Activated CD4-positive, alpha-beta T cell treated with anti-CD3 and anti-CD28 coated beads for 36 hours (primary cell): ENCODE measurements at regions of chr9 and their contacts with region 1.

Region 1: GRCh38 chr9:127734747-127735529 is at the start of gene TOR2A:
- DNase-seq: peak; percentile 99
- ATAC-seq: peak; percentile 93
- H3K4me3 Mint-ChIP-seq: peak within 1 kb of the TSS; percentile 72
- H3K27ac Mint-ChIP-seq: peak within 1 kb of the TSS; percentile 73
- H3K4me1 Mint-ChIP-seq: peaks cover 12% of the 10 kb centered on the region
- H3K27me3 Mint-ChIP-seq: no peaks in the 10 kb centered on the region
- total RNA-seq, gene TOR2A: 11.3 to 14.0 TPM

Region 2: GRCh38 chr9:127450830-127451724 is 283.9 kb before region 1 on chr9 and contains the starts of genes LRSAM1 and RPL12:
- CTCF ChIA-PET with region 1: interaction called, 3 read pairs
- POLR2A ChIA-PET with region 1: interaction called, 6 read pairs
- intact Hi-C with region 1: loop called in 1 of 2 experiments (anchors 1 kb)
- DNase-seq: peak; percentile 99
- ATAC-seq: peak; percentile 65
- H3K4me3 Mint-ChIP-seq: peak within 1 kb of the TSS; percentile 98
- H3K27ac Mint-ChIP-seq: peak within 1 kb of the TSS; percentile 98
- H3K4me1 Mint-ChIP-seq: peaks cover 36% of the 10 kb centered on the region
- H3K27me3 Mint-ChIP-seq: no peaks in the 10 kb centered on the region
- total RNA-seq, gene LRSAM1: 20.0 to 20.4 TPM
- total RNA-seq, gene RPL12: 2,222 to 2,735 TPM

Region 3: DNA sequence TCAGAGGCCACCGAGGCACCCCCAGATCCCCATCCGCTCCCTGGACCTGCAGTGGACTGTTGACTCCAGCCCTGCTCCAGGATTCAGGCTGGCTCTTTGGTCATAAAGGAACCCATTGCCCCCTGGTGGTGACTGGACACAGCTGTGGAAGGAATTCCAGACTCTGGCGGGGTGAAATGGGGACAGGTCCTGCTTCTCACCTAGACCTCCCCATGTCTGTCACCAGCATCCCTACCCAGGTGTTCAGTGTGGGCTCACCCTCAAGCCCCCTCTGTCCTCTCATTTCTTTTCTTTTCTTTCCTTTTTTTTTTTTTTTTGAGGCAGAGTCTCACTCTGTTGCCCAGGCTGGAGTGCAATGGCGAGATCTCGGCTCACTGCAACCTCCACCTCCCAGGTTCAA is 148.4 kb before region 1 on chr9:
- CTCF ChIA-PET with region 1: interaction called, 12 read pairs
- POLR2A ChIA-PET with region 1: no interaction called
- intact Hi-C with region 1: loop called (anchors 1 kb)
- DNase-seq: peak; percentile 75
- ATAC-seq: peak; percentile 74
- H3K4me3 Mint-ChIP-seq: no peak overlapping the region
- H3K27ac Mint-ChIP-seq: no peak overlapping the region
- H3K4me1 Mint-ChIP-seq: peaks cover 4% of the 10 kb centered on the region
- H3K27me3 Mint-ChIP-seq: peaks cover 15% of the 10 kb centered on the region

Region 4: GRCh38 chr9:127715394-127716337 is 19.3 kb before region 1 on chr9 and contains the starts of genes PTRH1 and TTC16:
- CTCF ChIA-PET with region 1: interaction called, 14 read pairs
- POLR2A ChIA-PET with region 1: interaction called, 6 read pairs
- intact Hi-C with region 1: loop called (anchors 1 kb)
- DNase-seq: peak; percentile 99
- ATAC-seq: peak; percentile 97
- H3K4me3 Mint-ChIP-seq: peak within 1 kb of the TSS; percentile 92
- H3K27ac Mint-ChIP-seq: peak within 1 kb of the TSS; percentile 97
- H3K4me1 Mint-ChIP-seq: peaks cover 25% of the 10 kb centered on the region
- H3K27me3 Mint-ChIP-seq: no peaks in the 10 kb centered on the region
- total RNA-seq, gene PTRH1: 12.9 to 15.1 TPM
- total RNA-seq, gene TTC16: 0.16 to 0.30 TPM

Region 5: DNA sequence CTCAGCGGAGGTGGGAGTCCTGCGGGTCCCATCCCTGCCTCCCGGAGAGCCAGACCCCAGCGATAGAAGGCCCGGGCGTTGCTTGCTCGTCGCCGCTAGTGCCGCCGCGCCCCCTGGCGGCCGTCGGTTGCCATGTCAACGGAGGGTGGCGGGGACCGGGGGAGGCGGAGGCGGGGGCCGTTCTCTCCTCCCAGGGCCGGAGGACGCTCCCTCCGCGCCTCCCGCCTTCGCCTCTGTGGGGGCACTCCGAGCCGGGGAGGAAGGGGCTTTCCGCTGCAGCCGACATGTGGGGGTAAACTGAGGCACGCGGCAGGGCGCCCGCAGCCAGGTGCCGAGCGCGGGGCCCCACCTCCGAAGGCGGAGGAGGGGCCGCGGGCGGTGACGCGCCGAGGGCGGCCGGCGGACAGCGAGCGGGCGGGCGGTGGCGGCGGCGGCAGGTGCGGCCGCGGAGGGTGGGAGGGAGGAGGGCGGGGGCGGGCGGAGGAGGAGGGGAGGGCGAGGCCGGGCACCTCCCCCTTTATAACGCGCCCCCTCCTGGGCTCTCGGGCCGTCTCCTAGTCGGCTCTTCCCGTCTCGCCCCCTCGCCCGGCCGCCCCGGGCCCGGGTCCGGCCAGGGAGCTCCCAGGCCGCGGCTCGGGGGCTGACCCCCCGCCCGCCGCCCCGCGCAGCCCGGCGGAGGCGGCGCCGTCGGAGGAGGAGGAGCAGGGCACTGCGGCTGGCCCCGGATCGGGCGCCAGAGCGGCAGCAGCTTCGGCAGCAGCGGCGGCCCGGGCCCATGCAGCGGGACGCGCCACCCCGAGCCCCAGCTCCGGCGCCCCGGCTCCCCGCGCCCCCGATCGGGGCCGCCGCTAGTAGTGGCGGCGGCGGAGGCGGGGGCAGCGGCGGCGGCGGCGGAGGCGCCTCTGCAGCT is 50.3 kb after region 1 on chr9:
- CTCF ChIA-PET with region 1: interaction called, 13 read pairs
- POLR2A ChIA-PET with region 1: interaction called, 6 read pairs
- intact Hi-C with region 1: loop called (anchors 1 kb)
- DNase-seq: peak; percentile 93
- ATAC-seq: peak; percentile 34
- H3K4me3 Mint-ChIP-seq: peak overlapping the region; percentile 97
- H3K27ac Mint-ChIP-seq: peak overlapping the region; percentile 97
- H3K4me1 Mint-ChIP-seq: peaks cover 74% of the 10 kb centered on the region
- H3K27me3 Mint-ChIP-seq: no peaks in the 10 kb centered on the region

Region 6: GRCh38 chr9:127869310-127870152 is 134.6 kb after region 1 on chr9:
- CTCF ChIA-PET with region 1: interaction called, 23 read pairs
- POLR2A ChIA-PET with region 1: interaction called, 5 read pairs
- intact Hi-C with region 1: loop called (anchors 1 kb)
- DNase-seq: peak; percentile 91
- ATAC-seq: peak; percentile 75
- H3K4me3 Mint-ChIP-seq: no peak overlapping the region
- H3K27ac Mint-ChIP-seq: no peak overlapping the region
- H3K4me1 Mint-ChIP-seq: peaks cover 16% of the 10 kb centered on the region
- H3K27me3 Mint-ChIP-seq: no peaks in the 10 kb centered on the region

Region 7: DNA sequence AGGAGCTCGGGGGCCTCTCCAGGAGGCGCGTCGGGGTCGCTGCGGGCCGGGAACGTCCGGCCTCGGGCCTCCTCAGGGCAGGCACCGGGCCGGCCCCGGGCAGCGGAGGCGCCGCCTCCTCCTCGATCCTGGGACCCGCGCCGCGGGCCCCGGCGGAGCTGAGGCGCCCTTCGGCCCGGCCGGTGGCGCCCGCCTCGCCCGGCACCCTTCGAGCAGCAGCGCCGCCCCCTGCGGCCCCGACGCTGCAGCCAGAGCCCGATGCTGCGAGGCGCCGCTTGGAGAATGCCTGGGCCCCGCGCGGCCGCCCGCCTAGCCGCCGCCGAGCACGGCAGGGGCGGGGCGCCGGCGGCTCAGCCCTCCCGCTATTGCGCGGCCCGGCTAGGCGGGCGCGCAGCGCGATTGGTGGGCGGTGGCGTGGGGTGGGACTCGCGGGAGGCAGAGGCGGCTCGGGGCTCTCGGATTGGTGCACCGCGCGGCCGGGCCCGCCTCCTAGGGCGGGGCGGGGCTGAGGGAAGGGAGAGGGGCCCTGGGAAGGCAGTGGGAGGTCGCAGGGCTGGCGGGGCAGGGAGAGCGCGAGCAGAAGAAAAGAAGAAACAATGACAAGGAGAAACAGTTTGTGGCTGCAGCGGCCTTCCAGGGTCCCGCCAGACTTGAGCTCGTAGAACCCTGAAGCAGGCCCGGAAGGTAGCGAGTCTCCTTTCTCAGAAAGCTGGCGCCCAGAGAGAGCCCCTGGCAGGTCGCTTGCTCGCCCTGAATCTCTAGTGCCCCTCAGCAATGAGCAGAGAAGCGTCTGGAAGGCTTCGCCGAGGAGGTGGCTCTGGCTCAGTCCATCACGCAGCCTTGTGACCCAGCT is 246.0 kb after region 1 on chr9 and contains the start of gene EEIG1:
- CTCF ChIA-PET with region 1: no interaction called
- POLR2A ChIA-PET with region 1: no interaction called
- intact Hi-C with region 1: no loop called
- DNase-seq: peak; percentile 99
- ATAC-seq: peak; percentile 87
- H3K4me3 Mint-ChIP-seq: peak within 1 kb of the TSS; percentile 97
- H3K27ac Mint-ChIP-seq: peak within 1 kb of the TSS; percentile 98
- H3K4me1 Mint-ChIP-seq: peaks cover 47% of the 10 kb centered on the region
- H3K27me3 Mint-ChIP-seq: no peaks in the 10 kb centered on the region
- total RNA-seq, gene EEIG1: 56.2 to 58.4 TPM

Region 8: GRCh38 chr9:128420060-128420650 is 685.2 kb after region 1 on chr9:
- CTCF ChIA-PET with region 1: no interaction called
- POLR2A ChIA-PET with region 1: no interaction called
- intact Hi-C with region 1: no loop called
- DNase-seq: peak; percentile 79
- ATAC-seq: peak; percentile 75
- H3K4me3 Mint-ChIP-seq: peak overlapping the region; percentile 59
- H3K27ac Mint-ChIP-seq: no peak overlapping the region
- H3K4me1 Mint-ChIP-seq: peaks cover 10% of the 10 kb centered on the region
- H3K27me3 Mint-ChIP-seq: peaks cover 25% of the 10 kb centered on the region